ENCODE measurements at regions of chr15 and their contacts with region 1.

Region 1: DNA sequence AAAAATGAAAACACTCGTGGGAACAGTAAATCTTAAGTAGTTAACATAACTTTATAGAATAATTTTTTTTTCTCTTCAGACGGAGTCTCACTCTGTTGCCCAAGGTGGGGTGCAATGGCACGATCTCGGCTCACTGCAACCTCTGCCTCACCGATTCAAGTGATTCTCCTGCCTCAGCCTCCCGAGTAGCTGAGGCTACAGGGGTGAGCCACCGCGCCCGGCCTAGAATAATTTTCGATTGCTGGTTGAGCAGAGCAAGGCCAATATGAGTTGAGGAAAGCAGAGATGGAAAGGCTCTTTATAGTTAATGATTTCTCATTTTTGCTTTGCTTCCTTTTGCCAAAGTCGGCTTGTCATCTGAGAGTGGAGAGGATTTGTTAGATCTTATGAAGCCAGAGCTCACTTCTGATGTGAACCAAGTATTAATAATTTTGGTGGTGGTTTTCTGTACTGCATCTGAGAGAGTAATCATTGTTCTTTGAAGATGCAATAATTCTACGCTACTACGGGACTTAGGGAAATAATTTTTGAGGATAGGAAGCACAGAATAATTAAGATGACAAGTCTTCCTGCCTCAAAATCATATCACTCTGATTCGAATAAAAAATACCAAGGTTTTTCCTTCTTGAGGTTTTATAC is 1.6 kb upstream of the GOLM2 start:
- DNase-seq: no peak
- H3K4me3 Mint-ChIP-seq: peak overlapping the region; percentile 86
- H3K27ac Mint-ChIP-seq: peak overlapping the region; percentile 50
- H3K4me1 Mint-ChIP-seq: peaks cover 36% of the 10 kb centered on the region
- H3K27me3 Mint-ChIP-seq: peaks cover 3% of the 10 kb centered on the region

Region 2: GRCh38 chr15:44195151-44195740 is 91.7 kb before region 1 on chr15 and contains the start of gene FRMD5:
- CTCF ChIA-PET with region 1: no interaction called
- POLR2A ChIA-PET with region 1: no interaction called
- intact Hi-C with region 1: loop called (anchors 1 kb)
- DNase-seq: peak; percentile 94
- H3K4me3 Mint-ChIP-seq: peak within 1 kb of the TSS; percentile 68
- H3K27ac Mint-ChIP-seq: no peak within 1 kb of the TSS
- H3K4me1 Mint-ChIP-seq: peaks cover 16% of the 10 kb centered on the region
- H3K27me3 Mint-ChIP-seq: peaks cover 42% of the 10 kb centered on the region
- total RNA-seq, gene FRMD5: 0.24 to 0.31 TPM

Region 3: GRCh38 chr15:44536962-44537734 is 250.2 kb after region 1 on chr15 and contains the start of gene EIF3J:
- CTCF ChIA-PET with region 1: no interaction called
- POLR2A ChIA-PET with region 1: interaction called, 4 read pairs
- intact Hi-C with region 1: loop called (anchors 2 kb)
- DNase-seq: peak; percentile 96
- H3K4me3 Mint-ChIP-seq: peak within 1 kb of the TSS; percentile 84
- H3K27ac Mint-ChIP-seq: peak within 1 kb of the TSS; percentile 94
- H3K4me1 Mint-ChIP-seq: peaks cover 43% of the 10 kb centered on the region
- H3K27me3 Mint-ChIP-seq: no peaks in the 10 kb centered on the region
- total RNA-seq, gene EIF3J: 92.6 to 95.2 TPM